PC-3 (cell line): ENCODE measurements at regions of chr2 and their contacts with region 1.

Region 1: DNA sequence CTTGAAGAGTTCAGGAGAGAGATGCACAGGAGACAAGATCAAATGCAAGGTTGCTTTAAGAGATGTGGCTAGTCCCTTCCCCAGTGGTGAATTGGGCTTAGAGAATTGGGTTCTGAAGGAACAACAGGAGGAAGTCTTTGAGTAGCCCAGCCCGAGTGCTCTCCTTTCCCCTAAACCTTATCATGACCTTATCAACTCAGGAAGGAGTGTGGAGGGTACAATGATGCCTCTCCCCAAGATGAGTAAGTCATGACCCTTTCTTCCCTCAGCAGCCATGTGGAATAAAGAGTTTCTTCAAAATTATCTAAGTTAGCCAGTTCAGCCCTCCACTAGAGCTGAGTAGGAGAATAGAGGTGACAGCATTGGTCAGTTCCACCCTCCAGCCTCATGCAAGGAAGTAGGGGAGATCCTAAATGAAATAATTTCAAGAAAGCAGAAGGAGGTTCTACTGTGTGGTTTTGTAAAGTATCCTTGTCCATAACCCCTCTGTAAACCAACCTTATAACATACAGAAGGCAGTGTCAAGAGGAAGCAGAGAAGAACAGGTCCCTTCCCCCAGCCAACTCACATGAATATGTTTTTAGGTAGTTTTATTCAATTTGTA is 88.4 kb downstream of the ARHGAP15 start:
- DNase-seq: no peak
- ATAC-seq: no peak
- H3K4me3 ChIP-seq: no peak overlapping the region
- H3K27ac ChIP-seq: no peak overlapping the region
- H3K4me1 ChIP-seq: no peaks in the 10 kb centered on the region
- H3K27me3 ChIP-seq: peaks cover 22% of the 10 kb centered on the region
- CTCF ChIP-seq: no peak

Region 2: DNA sequence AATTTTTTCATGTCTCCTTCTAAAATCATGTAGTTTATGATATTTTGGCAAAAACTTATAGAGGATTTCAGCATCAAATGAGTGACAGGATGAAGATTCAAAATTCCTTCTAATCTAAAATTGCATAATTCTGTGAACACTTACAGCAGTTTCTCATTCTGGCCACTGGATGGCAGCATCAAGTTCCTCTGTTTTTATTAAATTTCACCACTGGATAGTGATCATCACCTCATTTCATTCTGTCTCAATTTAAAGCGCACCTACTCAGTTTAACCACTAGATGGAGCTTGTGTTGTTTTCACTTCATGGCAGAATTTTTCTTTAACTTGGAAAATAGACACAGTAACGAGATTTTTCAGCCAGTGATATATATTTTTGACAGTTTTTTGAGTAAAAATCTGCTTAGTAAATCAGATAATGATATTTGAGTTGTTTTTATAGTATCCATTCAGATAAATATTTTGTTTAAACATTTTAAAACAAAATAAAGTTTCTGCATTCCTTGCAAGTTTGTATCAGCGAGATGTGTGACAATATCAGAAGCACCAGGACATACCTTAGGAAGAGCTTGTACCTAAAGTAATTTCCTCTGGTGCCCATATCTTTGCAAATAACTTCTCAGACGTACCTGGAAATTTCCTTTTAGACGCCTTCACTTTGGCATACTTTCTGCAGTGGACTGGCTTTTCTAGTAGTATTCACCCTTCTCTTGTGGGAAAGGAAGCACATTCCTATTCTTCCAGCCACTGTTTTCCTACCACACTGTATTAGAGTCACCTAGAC is 183.1 kb before region 1 on chr2:
- CTCF ChIA-PET with region 1: no interaction called
- POLR2A ChIA-PET with region 1: no interaction called
- intact Hi-C with region 1: loop called (anchors 1 kb)
- DNase-seq: peak; percentile 88
- ATAC-seq: peak; percentile 62
- H3K4me3 ChIP-seq: no peak overlapping the region
- H3K27ac ChIP-seq: no peak overlapping the region
- H3K4me1 ChIP-seq: no peaks in the 10 kb centered on the region
- H3K27me3 ChIP-seq: no peaks in the 10 kb centered on the region
- CTCF ChIP-seq: peak; percentile 98

Region 3: DNA sequence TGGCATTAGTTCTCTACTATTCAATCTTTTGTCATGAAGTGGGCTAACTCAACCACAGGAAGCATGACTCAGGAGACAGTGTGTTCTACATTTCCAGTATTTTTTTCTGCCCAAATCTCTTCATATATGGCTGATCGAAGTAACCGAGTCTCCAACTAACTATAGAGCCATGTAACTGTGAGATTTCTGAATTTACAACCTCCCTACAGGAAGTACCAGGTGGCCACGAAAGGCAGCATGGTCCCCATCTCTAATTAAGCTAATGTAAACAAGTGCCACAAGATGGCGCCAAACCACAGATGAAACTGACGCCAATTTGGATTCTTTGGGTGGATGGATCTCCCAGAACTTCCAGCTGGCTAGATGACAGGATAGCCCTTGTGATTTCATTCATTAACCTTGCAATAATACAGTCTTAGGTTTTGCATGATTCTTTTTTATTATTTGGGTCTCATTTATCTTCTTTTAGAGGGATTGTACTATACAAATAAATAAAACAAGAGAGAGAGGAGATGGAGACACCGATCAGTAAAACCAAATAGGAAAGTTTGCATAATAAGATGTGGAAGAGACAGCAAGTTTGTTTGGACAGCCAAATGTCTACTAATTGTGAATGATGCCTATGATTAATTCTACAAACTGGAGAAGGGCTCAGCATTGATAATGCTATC is 106.7 kb before region 1 on chr2:
- CTCF ChIA-PET with region 1: interaction called, 6 read pairs
- POLR2A ChIA-PET with region 1: no interaction called
- intact Hi-C with region 1: loop called (anchors 1 kb)
- DNase-seq: peak; percentile 78
- ATAC-seq: peak; percentile 74
- H3K4me3 ChIP-seq: no peak overlapping the region
- H3K27ac ChIP-seq: no peak overlapping the region
- H3K4me1 ChIP-seq: no peaks in the 10 kb centered on the region
- H3K27me3 ChIP-seq: peaks cover 25% of the 10 kb centered on the region
- CTCF ChIP-seq: peak; percentile 86

Region 4: GRCh38 chr2:143162123-143162837 is 55.3 kb before region 1 on chr2:
- CTCF ChIA-PET with region 1: interaction called, 7 read pairs
- POLR2A ChIA-PET with region 1: no interaction called
- intact Hi-C with region 1: loop called (anchors 1 kb)
- DNase-seq: peak; percentile 52
- ATAC-seq: peak; percentile 95
- H3K4me3 ChIP-seq: no peak overlapping the region
- H3K27ac ChIP-seq: no peak overlapping the region
- H3K4me1 ChIP-seq: no peaks in the 10 kb centered on the region
- H3K27me3 ChIP-seq: peaks cover 61% of the 10 kb centered on the region
- CTCF ChIP-seq: peak; percentile 74

Region 5: GRCh38 chr2:143193121-143193520 is 24.5 kb before region 1 on chr2:
- CTCF ChIA-PET with region 1: no interaction called
- POLR2A ChIA-PET with region 1: no interaction called
- intact Hi-C with region 1: no loop called
- DNase-seq: no peak
- ATAC-seq: no peak
- H3K4me3 ChIP-seq: no peak overlapping the region
- H3K27ac ChIP-seq: no peak overlapping the region
- H3K4me1 ChIP-seq: no peaks in the 10 kb centered on the region
- H3K27me3 ChIP-seq: peaks cover 67% of the 10 kb centered on the region
- CTCF ChIP-seq: no peak